ENCODE measurements at regions of chr22 and their contacts with region 1.

Region 1: GRCh38 chr22:20528405-20528978 is 21.1 kb downstream of the MED15 start:
- DNase-seq: no peak
- H3K4me3 Mint-ChIP-seq: no peak overlapping the region
- H3K27ac Mint-ChIP-seq: no peak overlapping the region
- H3K4me1 Mint-ChIP-seq: peaks cover 53% of the 10 kb centered on the region
- H3K27me3 Mint-ChIP-seq: no peaks in the 10 kb centered on the region

Region 2: GRCh38 chr22:20542736-20543135 is 14.2 kb after region 1 on chr22:
- intact Hi-C with region 1: loop called (anchors 2 kb)
- DNase-seq: no peak
- H3K4me3 Mint-ChIP-seq: no peak overlapping the region
- H3K27ac Mint-ChIP-seq: no peak overlapping the region
- H3K4me1 Mint-ChIP-seq: peaks cover 38% of the 10 kb centered on the region
- H3K27me3 Mint-ChIP-seq: no peaks in the 10 kb centered on the region